ENCODE measurements at regions of chr17 and their contacts with region 1.

Region 1: GRCh38 chr17:58328195-58329034 is at the start of gene TSPOAP1:
- DNase-seq: peak; percentile 95
- H3K4me3 ChIP-seq: peak within 1 kb of the TSS in 1 of 2 experiments; percentile 23; a peak in 1 of 4 replicates
- H3K27ac ChIP-seq: peak within 1 kb of the TSS in 1 of 2 experiments; percentile 7; a peak in 1 of 4 replicates
- H3K4me1 ChIP-seq: peaks cover 0 to 35% of the 10 kb centered on the region in 2 experiments; a peak in 1 of 4 replicates
- H3K27me3 ChIP-seq: peaks cover 21% of the 10 kb centered on the region; the same call in 1 of the 2 replicates
- CTCF ChIP-seq: no peak
- EP300 ChIP-seq: no peak
- RAD21 ChIP-seq: no peak
- polyA plus RNA-seq, gene TSPOAP1: 0.79 and 1.9 TPM in 2 replicates

Region 2: GRCh38 chr17:58263773-58264172 is 64.6 kb before region 1 on chr17:
- CTCF ChIA-PET with region 1: no interaction called
- POLR2A ChIA-PET with region 1: no interaction called
- DNase-seq: no peak
- H3K4me3 ChIP-seq: no peak overlapping the region
- H3K27ac ChIP-seq: no peak overlapping the region
- H3K4me1 ChIP-seq: no peaks in the 10 kb centered on the region
- H3K27me3 ChIP-seq: peaks cover 50% of the 10 kb centered on the region
- CTCF ChIP-seq: no peak
- EP300 ChIP-seq: no peak
- RAD21 ChIP-seq: no peak

Region 3: DNA sequence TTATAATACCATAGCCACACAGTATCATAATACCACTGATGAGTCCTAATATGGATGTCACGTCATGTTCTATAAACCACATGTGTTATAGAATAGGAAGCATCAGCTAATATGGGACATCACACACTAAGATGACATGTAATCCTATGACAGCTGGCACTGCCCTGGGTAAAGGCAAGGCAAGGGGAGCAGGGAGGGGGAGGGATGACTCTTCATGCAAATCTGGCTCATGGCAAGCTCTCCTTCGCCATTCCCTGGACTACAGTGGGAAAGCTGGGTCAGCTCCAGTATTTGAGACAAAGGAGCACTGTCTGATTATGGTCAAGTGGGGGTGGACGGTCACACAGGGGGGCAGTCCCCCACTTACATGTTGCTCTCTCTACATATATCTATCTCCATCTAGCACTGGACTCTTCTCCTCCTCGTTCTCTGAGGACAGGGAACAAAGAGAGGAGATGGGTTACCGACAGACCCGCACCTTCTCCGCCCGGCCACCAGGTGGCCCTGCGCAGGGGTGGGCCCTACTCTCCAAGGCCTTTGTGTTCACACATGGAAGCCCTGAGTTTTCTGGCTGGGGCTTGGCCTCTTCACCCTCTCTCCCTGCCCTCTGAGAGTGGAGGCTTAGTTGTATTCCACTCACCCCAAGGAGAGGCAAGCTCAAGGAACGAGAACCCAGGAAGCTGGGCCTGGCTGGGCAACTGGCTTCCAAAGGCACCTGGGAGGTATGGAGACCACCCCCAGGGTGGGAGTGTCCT is 24.3 kb before region 1 on chr17:
- CTCF ChIA-PET with region 1: interaction called, 21 read pairs
- POLR2A ChIA-PET with region 1: no interaction called
- DNase-seq: peak; percentile 93
- H3K4me3 ChIP-seq: no peak overlapping the region
- H3K27ac ChIP-seq: no peak overlapping the region
- H3K4me1 ChIP-seq: peaks cover 0 to 3% of the 10 kb centered on the region in 2 experiments; a peak in 1 of 4 replicates
- H3K27me3 ChIP-seq: peaks cover 11% of the 10 kb centered on the region; the same call in 1 of the 2 replicates
- CTCF ChIP-seq: peak; percentile 77
- EP300 ChIP-seq: no peak
- RAD21 ChIP-seq: peak; percentile 61

Region 4: DNA sequence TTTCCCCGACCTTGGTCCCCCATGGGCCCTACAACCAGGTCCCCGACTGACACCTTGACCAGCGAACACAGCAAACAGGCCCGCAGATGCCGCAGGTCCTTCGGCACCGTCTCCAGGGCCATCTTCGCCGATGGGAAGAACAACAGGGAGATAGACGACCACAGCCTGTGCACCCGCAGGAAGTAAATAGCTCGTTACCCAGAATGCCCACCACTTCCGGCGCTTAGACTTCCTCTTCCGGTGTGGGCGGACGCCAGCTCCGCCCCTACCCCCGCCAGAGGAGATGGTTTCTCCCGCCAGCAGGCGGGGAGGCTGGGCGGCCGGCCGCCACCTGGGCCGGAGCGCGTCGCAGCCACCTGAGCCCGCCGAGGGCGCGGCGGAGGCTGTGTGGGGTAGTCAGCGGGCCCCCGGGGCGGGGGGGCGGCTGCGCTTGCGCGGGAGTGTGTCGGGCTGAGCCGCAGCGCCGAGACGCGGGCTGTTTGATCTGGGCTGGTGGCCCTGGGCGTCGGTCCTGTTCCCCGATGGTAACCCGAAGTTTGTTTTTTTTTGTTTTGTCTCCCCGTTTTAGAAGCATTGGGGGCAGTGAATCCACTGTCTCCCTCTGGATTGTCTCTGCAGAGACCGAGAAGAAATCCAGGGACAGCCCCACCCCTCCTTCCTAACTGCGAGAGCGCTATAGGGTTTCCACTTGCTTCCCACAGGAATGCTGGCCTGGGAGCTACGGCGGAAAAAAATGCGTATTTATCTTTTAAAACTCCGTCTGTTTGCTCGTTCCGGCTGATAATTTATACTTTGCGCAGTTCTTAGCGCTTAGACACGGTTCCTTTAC is 23.8 kb after region 1 on chr17 and contains the start of gene SUPT4H1:
- CTCF ChIA-PET with region 1: interaction called, 3 read pairs
- POLR2A ChIA-PET with region 1: interaction called, 57 read pairs
- DNase-seq: peak; percentile 99
- H3K4me3 ChIP-seq: peak within 1 kb of the TSS; percentile 74 to 99
- H3K27ac ChIP-seq: peak within 1 kb of the TSS; percentile 69 to 80
- H3K4me1 ChIP-seq: peaks cover 0 to 10% of the 10 kb centered on the region in 2 experiments; a peak in 2 of 4 replicates
- H3K27me3 ChIP-seq: no peaks in the 10 kb centered on the region
- CTCF ChIP-seq: no peak
- EP300 ChIP-seq: peak; percentile 1 to 51; a peak in 1 of 4 replicates
- RAD21 ChIP-seq: no peak
- polyA plus RNA-seq, gene SUPT4H1: 165 and 205 TPM in 2 replicates

Region 5: GRCh38 chr17:58493491-58493890 is 165.1 kb after region 1 on chr17:
- CTCF ChIA-PET with region 1: no interaction called
- POLR2A ChIA-PET with region 1: interaction called, 11 read pairs
- DNase-seq: no peak
- H3K4me3 ChIP-seq: no peak overlapping the region
- H3K27ac ChIP-seq: no peak overlapping the region
- H3K4me1 ChIP-seq: no peaks in the 10 kb centered on the region
- H3K27me3 ChIP-seq: no peaks in the 10 kb centered on the region
- CTCF ChIP-seq: no peak
- EP300 ChIP-seq: no peak
- RAD21 ChIP-seq: no peak

Measured in SK-N-SH (cell line).